ENCODE measurements at regions of chr12 and their contacts with region 1.

Region 1: GRCh38 chr12:76216585-76217472 is 131.4 kb downstream of the BBS10 start:
- DNase-seq: no peak
- ATAC-seq: no peak
- H3K4me3 ChIP-seq: no peak overlapping the region
- H3K4me3 Mint-ChIP-seq: no peak overlapping the region
- H3K27ac ChIP-seq: no peak overlapping the region
- H3K27ac Mint-ChIP-seq: no peak overlapping the region
- H3K4me1 ChIP-seq: no peaks in the 10 kb centered on the region
- H3K4me1 Mint-ChIP-seq: no peaks in the 10 kb centered on the region
- H3K27me3 ChIP-seq: peaks cover 0 to 2% of the 10 kb centered on the region in 2 experiments
- H3K27me3 Mint-ChIP-seq: peaks cover 3 to 10% of the 10 kb centered on the region in 2 donors

Region 2: DNA sequence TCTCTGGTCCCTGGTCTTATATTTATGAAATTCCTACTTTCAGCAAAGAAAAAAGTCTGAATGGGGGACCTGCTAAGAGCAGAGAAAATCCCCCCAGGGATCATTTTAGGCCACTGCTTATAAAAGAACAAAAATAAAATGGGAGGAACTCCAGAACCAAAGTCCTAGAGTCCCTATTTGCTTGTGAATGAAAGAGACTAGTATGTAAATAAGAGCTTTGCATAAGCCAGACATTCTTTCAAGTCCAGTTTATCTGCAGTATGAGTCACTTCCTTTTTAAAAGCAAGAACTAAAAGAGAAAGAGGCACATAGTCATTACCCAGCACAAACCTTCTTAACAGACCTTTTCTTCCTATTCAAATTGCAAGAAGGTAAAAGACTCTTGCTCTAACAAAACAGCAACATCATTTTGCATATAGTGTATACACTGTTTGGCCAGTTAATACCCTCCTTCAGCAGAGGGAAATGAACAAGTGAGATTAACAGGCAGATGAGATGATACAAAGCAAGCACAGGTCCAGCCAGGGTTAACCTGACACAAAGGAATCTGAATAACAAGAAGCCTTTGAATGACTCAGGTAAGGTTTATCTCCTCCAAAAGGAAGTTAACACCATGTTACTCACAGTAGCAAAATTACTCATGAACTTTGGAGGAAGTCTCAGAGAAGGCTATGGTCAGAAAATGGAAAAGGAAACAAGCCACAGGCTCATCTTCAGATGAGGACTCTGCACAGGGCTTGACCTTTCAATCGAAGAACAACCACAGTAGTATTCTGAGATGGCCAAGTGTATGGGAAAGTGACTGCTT is 272.5 kb before region 1 on chr12:
- CTCF ChIA-PET with region 1: no interaction called
- POLR2A ChIA-PET with region 1: no interaction called
- DNase-seq: peak in 1 of 35 experiments; percentile 46
- ATAC-seq: peak; percentile 87 to 95 (median 94)
- H3K4me3 ChIP-seq: no peak overlapping the region
- H3K4me3 Mint-ChIP-seq: peak overlapping the region in 2 of 3 donors; percentile 61 to 66
- H3K27ac ChIP-seq: peak overlapping the region; percentile 72
- H3K27ac Mint-ChIP-seq: peak overlapping the region; percentile 97
- H3K4me1 ChIP-seq: peaks cover 3 to 7% of the 10 kb centered on the region in 2 experiments
- H3K4me1 Mint-ChIP-seq: peaks cover 12 to 21% (median 20%) of the 10 kb centered on the region in 3 donors
- H3K27me3 ChIP-seq: no peaks in the 10 kb centered on the region
- H3K27me3 Mint-ChIP-seq: no peaks in the 10 kb centered on the region

Region 3: DNA sequence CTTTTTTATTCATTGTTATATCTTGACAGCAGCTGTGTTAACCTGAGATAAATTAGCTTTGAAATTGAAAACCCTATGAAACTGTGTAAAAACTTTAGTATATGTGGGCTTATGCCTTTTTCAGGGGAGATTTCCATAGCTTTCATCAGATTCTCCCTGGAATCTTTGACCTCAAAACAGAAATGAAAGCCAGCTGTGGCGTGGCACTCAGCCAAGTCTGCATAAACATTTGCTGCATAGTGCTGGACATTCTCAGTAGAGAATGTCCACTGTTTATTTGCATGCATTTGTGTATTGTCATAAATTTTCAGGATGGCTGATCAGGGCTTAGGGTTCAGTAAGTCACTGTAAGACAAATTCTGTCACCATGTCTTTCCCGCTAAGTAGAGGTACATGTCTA is 17.0 kb before region 1 on chr12:
- CTCF ChIA-PET with region 1: no interaction called
- POLR2A ChIA-PET with region 1: no interaction called
- DNase-seq: no peak
- ATAC-seq: no peak
- H3K4me3 ChIP-seq: no peak overlapping the region
- H3K4me3 Mint-ChIP-seq: no peak overlapping the region
- H3K27ac ChIP-seq: no peak overlapping the region
- H3K27ac Mint-ChIP-seq: no peak overlapping the region
- H3K4me1 ChIP-seq: peaks cover 0 to 2% of the 10 kb centered on the region in 2 experiments
- H3K4me1 Mint-ChIP-seq: peaks cover 0 to 12% (median 2%) of the 10 kb centered on the region in 3 donors
- H3K27me3 ChIP-seq: no peaks in the 10 kb centered on the region
- H3K27me3 Mint-ChIP-seq: peaks cover 19 to 34% of the 10 kb centered on the region in 2 donors

Region 4: GRCh38 chr12:76329163-76329562 is 112.3 kb after region 1 on chr12:
- CTCF ChIA-PET with region 1: no interaction called
- POLR2A ChIA-PET with region 1: no interaction called
- DNase-seq: no peak
- ATAC-seq: no peak
- H3K4me3 ChIP-seq: no peak overlapping the region
- H3K4me3 Mint-ChIP-seq: no peak overlapping the region
- H3K27ac ChIP-seq: no peak overlapping the region
- H3K27ac Mint-ChIP-seq: no peak overlapping the region
- H3K4me1 ChIP-seq: no peaks in the 10 kb centered on the region
- H3K4me1 Mint-ChIP-seq: no peaks in the 10 kb centered on the region
- H3K27me3 ChIP-seq: no peaks in the 10 kb centered on the region
- H3K27me3 Mint-ChIP-seq: peaks cover 12 to 39% of the 10 kb centered on the region in 2 donors

Region 5: DNA sequence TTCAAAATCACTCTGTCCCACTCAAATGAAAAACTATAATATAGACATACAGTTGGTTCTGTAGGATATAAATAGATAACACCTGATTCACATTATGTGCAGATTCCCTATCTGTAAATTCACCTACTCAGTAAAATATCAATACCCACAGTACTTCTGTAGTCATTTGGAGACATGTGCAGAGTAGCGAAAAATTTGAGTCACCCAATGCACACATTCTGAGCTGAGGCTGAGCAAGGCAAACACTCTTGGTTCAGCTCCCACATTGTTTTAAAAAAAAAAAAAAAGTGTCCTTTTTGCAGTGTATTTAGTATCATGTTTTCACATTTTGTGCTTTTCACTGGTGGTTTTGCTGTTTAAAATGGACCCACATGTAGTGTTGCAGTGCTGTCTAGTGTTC is 158.6 kb after region 1 on chr12:
- CTCF ChIA-PET with region 1: no interaction called
- POLR2A ChIA-PET with region 1: interaction called in 1 of 2 experiments, 10 read pairs
- DNase-seq: no peak
- ATAC-seq: no peak
- H3K4me3 ChIP-seq: no peak overlapping the region
- H3K4me3 Mint-ChIP-seq: no peak overlapping the region
- H3K27ac ChIP-seq: no peak overlapping the region
- H3K27ac Mint-ChIP-seq: no peak overlapping the region
- H3K4me1 ChIP-seq: no peaks in the 10 kb centered on the region
- H3K4me1 Mint-ChIP-seq: no peaks in the 10 kb centered on the region
- H3K27me3 ChIP-seq: no peaks in the 10 kb centered on the region
- H3K27me3 Mint-ChIP-seq: no peaks in the 10 kb centered on the region

Measured in T-cell (primary cell).